ENCODE measurements at regions of chr6 and their contacts with region 1.

Region 1: GRCh38 chr6:112253841-112254816 is at the start of gene LAMA4:
- DNase-seq: peak; percentile 68
- H3K4me3 Mint-ChIP-seq: peak within 1 kb of the TSS; percentile 71
- H3K27ac Mint-ChIP-seq: no peak within 1 kb of the TSS
- H3K4me1 Mint-ChIP-seq: peaks cover 12% of the 10 kb centered on the region
- H3K27me3 Mint-ChIP-seq: peaks cover 64% of the 10 kb centered on the region
- total RNA-seq, gene LAMA4: not detected in 2 replicates

Region 2: GRCh38 chr6:112199001-112199403 is 55.1 kb before region 1 on chr6:
- intact Hi-C with region 1: loop called (anchors 5 kb)
- DNase-seq: no peak
- H3K4me3 Mint-ChIP-seq: no peak overlapping the region
- H3K27ac Mint-ChIP-seq: no peak overlapping the region
- H3K4me1 Mint-ChIP-seq: peaks cover 7% of the 10 kb centered on the region
- H3K27me3 Mint-ChIP-seq: peaks cover 23% of the 10 kb centered on the region

Measured in activated CD4-positive, alpha-beta T cell treated with anti-CD3 and anti-CD28 coated beads, Interleukin-2, amount 10 ng/mL, durations not matched to agents 24 days and 14 days (primary cell).